Posterior vena cava (tissue), 2 donors: ENCODE measurements at regions of chr2 and their contacts with region 1.

Region 1: DNA sequence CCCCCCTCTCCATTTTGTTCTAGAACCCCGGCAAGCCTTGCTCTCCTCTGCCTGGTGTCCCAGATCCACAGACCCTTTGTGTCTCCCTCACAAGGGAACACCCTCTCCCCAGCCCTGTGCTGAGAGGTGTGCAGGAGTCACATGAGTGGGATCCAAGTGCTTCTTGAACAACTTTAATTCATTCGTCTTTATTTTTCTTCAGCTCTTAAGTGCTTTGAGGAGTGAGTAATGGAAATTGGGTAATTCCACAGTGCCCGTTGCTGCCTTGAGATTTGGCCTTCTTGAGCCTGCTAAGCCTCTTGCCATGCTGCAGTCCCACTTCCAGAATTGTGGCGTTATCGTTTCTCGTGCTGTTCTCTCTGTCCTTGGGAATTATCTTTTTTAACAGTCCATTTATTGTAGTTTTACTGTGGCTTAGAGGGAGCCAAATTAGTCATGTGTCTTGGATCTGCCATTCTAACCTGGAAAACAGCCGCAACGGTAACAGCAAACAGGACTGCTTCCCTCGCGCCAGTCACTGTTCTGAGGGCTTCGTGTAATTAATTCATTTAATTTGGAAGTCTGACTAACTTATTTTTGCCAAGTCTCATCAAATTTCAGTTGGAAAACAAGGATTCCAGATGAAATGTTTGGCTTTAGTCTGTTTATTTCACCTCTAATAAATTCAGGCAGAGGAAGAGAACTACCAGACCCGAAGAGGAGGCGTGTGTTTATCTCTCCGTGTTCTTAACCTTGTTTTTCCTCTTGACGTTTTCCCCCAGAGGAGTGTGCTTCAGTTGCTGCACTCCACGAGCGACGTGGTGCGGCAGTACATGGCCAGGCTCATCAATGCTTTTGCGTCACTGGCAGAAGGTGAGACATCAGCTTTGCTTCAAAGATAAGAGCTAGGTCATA is 72.0 kb downstream of the ARMC9 start:
- DNase-seq: no peak

Region 2: GRCh38 chr2:231258701-231259100 is 11.8 kb before region 1 on chr2:
- intact Hi-C with region 1: loop called in 1 of 2 experiments (anchors 1 kb)
- DNase-seq: no peak

Region 3: GRCh38 chr2:231321556-231322334 is 51.3 kb after region 1 on chr2:
- intact Hi-C with region 1: no loop called
- DNase-seq: peak; percentile 89

Region 4: DNA sequence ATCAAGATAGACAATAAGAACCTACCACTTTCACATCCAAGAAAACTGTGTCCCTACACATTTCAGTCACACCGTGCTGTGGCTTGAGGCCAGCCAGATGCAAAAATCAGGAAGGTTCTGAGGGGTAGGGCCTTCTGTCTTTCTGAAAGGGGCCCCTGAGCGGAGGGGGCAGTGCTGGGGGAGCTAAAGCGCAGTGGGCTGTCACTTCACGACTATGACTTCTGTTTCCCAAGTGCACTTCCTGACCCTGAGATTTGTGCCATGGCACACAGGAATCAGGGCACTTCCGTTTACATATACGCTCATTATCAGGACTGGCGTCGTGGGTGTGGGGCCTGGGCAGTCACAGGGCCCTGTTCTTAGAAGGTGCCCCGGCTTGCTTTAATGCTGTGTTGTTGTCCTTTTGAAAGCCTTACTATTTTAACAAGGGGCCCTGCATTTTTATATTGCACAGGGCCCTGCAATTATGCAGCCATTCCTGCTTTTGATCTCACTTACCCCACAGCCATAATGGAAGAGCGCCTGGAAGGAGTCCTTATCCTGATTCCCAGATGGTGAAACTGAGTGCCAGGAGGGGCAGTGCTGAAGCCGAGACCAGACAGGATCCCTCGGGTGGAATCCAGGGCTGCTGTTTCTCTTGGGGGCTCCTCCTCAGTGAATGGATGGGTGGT is 1742.0 kb after region 1 on chr2:
- intact Hi-C with region 1: no loop called
- DNase-seq: peak; percentile 31